ENCODE measurements at regions of chr10 and their contacts with region 1.

Region 1: DNA sequence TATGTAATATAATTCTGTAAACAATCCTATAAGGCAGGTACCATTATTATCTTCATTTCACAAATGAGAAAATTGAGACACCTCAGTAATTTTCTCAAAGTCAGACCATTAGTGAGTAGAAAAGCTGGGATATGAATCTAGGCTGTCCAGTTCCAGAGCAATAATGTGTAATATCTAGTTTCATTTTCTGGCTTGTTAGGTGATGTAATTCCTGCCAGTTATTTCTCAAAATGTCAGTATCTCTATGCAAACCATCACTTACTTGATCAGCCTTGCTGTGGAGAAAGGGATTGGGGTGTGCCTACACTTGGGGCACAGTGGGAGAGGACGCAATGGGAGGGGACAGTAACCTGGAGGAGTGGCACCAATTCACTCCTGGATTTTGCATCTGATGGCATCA is 157.5 kb downstream of the LYZL1 start:
- DNase-seq: no peak
- H3K4me3 ChIP-seq: no peak overlapping the region
- CTCF ChIP-seq: no peak
- POLR2A ChIP-seq: no peak

Region 2: DNA sequence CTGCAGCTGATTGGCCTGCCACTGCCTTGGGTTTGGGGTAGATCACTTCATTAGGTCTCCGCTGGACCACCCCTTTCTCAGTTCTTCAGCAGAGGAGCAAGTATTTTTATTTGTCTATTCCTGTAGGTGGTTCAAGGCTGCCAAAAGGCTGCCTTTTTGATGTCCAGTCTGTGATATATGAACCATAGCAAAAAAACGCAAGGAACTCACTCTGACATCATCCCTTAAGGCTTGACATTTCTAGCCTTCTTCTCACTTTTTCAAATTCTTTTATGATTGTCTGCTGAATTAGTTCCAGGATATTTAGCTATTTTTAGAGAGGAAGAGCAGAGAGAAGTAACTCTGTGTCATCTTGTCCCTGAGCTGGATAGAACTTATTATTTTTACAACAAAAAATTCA is 499.8 kb before region 1 on chr10:
- intact Hi-C with region 1: no loop called
- DNase-seq: no peak
- H3K4me3 ChIP-seq: no peak overlapping the region
- CTCF ChIP-seq: no peak
- POLR2A ChIP-seq: no peak

Region 3: DNA sequence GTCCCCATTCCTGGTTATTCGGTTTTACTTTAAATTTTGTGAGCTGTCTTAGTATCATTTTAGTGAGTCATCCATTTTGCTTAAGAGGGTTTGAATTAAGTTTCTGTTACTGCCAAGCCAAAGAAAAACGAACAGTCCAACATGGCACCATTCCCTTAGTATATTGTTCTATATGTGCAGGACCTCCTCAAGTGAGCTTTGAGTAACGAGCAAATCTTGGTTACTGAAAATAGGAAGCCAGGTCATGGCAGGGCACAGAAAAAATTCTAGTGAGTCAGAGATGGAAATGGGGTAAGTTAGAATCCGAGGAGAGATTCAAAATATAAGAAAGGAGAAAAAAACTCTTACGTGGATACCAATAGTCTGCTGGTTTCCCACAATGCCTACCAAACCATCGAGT is 476.1 kb before region 1 on chr10:
- intact Hi-C with region 1: no loop called
- DNase-seq: no peak
- H3K4me3 ChIP-seq: no peak overlapping the region
- CTCF ChIP-seq: no peak
- POLR2A ChIP-seq: no peak

Region 4: DNA sequence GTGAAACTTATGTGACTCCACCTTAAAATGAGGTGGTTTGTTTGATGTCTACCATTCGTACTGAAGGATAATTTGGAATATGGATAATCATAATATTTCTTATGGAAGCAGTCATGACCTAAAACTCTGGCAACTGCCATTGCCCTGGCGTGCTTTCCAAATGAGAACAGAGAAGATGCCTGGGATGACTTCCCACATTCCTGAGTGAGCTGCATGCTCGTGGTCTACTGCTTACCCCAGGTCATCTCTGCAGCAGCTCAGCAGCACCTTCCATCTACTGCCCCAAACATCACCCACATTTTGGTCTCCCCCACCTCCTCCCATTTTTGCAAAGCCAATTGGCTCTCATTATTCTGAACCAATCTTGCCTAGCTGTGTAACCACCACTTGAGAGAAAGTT is 117.3 kb before region 1 on chr10:
- intact Hi-C with region 1: no loop called
- DNase-seq: peak in 1 of 2 donors; percentile 58
- H3K4me3 ChIP-seq: no peak overlapping the region
- CTCF ChIP-seq: no peak
- POLR2A ChIP-seq: no peak

Region 5: GRCh38 chr10:29386342-29386999 is 59.9 kb before region 1 on chr10:
- intact Hi-C with region 1: loop called (anchors 5 kb)
- DNase-seq: no peak
- H3K4me3 ChIP-seq: no peak overlapping the region
- CTCF ChIP-seq: peak in 1 of 3 donors; percentile 36
- POLR2A ChIP-seq: no peak

Measured in lower leg skin (tissue), 4 donors.